ENCODE measurements at regions of chr13 and their contacts with region 1.

Region 1: DNA sequence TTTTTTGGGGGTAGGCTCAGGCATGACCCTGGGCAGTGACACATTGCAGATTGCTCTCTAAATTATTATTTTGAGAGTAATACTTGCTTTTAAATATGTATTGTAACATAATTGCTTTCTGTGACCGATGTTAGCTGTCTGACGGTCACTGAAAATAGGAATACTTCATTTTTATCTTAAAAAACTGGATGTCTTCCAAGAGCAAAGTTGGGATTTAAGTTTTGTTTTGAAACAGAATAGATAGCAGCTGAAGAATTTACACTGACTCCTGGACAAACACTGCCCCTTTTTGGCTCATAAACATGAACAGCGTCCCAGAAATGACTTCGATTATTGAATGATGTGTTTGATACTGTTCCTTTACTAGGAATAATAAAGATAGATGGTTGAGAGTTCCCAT is 535.9 kb downstream of the GPC5 start:
- DNase-seq: no peak
- H3K4me3 ChIP-seq: no peak overlapping the region
- H3K27ac ChIP-seq: no peak overlapping the region
- H3K4me1 ChIP-seq: no peaks in the 10 kb centered on the region
- H3K27me3 ChIP-seq: no peaks in the 10 kb centered on the region
- CTCF ChIP-seq: no peak
- EP300 ChIP-seq: no peak
- POLR2A ChIP-seq: no peak

Region 2: DNA sequence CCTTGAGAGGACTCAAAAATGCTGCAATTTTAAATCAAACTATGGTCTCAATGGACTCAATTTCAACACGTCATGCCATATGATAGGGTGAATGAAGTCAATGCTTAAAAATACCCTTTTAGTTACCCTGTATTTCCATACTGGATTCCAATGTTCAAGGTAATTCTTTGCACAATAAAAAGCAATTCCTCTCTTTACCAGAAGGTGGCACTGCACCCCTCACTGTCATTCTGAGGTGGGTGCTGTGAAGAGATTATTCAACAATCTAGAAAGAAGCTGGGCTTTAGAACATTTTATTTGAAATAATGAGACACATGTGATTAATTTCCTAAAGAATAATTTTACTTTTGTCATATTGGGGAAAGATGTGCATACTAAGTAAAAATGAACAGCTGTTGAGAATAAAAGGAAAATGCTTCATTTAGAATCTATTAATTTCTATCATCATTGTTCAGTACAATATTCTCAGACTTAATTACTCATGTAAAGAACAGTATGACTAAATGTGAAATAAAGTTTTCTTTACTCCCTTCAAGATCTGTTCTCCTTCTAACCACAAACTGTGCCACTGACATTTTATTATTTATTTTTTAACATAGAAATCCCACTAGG is 253.1 kb after region 1 on chr13:
- in situ Hi-C with region 1: no loop called
- intact Hi-C with region 1: no loop called
- DNase-seq: no peak
- H3K4me3 ChIP-seq: no peak overlapping the region
- H3K27ac ChIP-seq: no peak overlapping the region
- H3K4me1 ChIP-seq: no peaks in the 10 kb centered on the region
- H3K27me3 ChIP-seq: no peaks in the 10 kb centered on the region
- CTCF ChIP-seq: peak; percentile 75 to 87 (median 86)
- EP300 ChIP-seq: no peak
- POLR2A ChIP-seq: no peak

Region 3: DNA sequence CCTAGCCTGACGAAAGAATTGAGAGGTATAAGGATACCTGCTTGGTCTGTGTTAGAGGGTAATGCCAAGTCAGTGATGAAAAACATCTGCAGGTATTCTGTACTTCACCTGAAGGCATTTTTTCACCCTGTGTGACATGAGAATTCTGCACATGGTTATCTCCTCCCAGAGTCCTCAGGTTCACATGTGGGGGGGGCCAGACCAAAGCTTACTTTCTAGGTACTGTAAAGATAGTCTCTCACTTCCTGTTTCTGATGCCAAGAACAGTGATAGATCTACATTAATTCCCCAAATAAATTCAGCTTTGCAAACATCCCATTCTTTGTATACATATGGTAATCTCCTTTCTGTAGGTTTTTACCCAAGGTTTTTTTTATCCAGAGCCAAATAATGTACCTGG is 1345.6 kb after region 1 on chr13:
- in situ Hi-C with region 1: no loop called
- intact Hi-C with region 1: loop called (anchors 5 kb)
- DNase-seq: no peak
- H3K4me3 ChIP-seq: no peak overlapping the region
- H3K27ac ChIP-seq: no peak overlapping the region
- H3K4me1 ChIP-seq: no peaks in the 10 kb centered on the region
- H3K27me3 ChIP-seq: no peaks in the 10 kb centered on the region
- CTCF ChIP-seq: no peak
- EP300 ChIP-seq: no peak
- POLR2A ChIP-seq: no peak

Measured in transverse colon (tissue), 4 donors.